ENCODE measurements at regions of chr6 and their contacts with region 1.

Region 1: GRCh38 chr6:144922120-144922722 is 637.1 kb downstream of the UTRN start:
- DNase-seq: peak; percentile 4
- ATAC-seq: peak; percentile 56
- H3K4me3 ChIP-seq: no peak overlapping the region
- H3K27ac ChIP-seq: peak overlapping the region; percentile 90
- H3K4me1 ChIP-seq: peaks cover 29% of the 10 kb centered on the region
- H3K27me3 ChIP-seq: no peaks in the 10 kb centered on the region
- CTCF ChIP-seq: no peak

Region 2: GRCh38 chr6:144797881-144798595 is 124.2 kb before region 1 on chr6:
- CTCF ChIA-PET with region 1: no interaction called
- POLR2A ChIA-PET with region 1: no interaction called
- intact Hi-C with region 1: loop called (anchors 5 kb)
- DNase-seq: peak; percentile 95
- ATAC-seq: peak; percentile 87
- H3K4me3 ChIP-seq: peak overlapping the region; percentile 16; the same call in 1 of the 2 replicates
- H3K27ac ChIP-seq: peak overlapping the region; percentile 83
- H3K4me1 ChIP-seq: peaks cover 27% of the 10 kb centered on the region
- H3K27me3 ChIP-seq: no peaks in the 10 kb centered on the region
- CTCF ChIP-seq: no peak